HAP-1 (cell line): ENCODE measurements at regions of chr22 and their contacts with region 1.

Region 1: DNA sequence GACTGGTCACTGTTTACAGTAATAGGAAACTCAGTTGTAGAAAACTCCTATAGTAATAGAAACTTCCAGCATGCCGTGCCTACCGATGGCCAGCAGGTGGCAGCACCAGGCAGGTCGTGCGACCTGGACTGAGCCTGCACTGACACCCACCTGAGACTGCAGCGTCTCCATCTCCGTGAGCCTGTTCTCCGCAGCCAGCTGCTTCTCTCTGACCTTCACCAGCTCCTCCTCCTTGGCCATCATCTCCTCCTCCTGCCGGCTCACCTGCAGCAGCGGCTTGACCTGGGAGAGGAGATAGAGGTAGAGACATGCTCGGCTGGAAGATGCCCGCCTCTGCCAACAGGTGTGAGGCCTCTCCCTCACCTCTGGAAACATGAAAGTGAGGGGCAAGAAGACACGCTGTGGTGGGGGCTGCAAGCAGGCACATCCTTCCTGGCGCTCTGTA is 48.5 kb downstream of the APOL1 start:
- DNase-seq: peak; percentile 51 to 84
- H3K4me3 ChIP-seq: no peak overlapping the region
- H3K4me1 ChIP-seq: no peaks in the 10 kb centered on the region
- H3K27me3 ChIP-seq: no peaks in the 10 kb centered on the region

Region 2: DNA sequence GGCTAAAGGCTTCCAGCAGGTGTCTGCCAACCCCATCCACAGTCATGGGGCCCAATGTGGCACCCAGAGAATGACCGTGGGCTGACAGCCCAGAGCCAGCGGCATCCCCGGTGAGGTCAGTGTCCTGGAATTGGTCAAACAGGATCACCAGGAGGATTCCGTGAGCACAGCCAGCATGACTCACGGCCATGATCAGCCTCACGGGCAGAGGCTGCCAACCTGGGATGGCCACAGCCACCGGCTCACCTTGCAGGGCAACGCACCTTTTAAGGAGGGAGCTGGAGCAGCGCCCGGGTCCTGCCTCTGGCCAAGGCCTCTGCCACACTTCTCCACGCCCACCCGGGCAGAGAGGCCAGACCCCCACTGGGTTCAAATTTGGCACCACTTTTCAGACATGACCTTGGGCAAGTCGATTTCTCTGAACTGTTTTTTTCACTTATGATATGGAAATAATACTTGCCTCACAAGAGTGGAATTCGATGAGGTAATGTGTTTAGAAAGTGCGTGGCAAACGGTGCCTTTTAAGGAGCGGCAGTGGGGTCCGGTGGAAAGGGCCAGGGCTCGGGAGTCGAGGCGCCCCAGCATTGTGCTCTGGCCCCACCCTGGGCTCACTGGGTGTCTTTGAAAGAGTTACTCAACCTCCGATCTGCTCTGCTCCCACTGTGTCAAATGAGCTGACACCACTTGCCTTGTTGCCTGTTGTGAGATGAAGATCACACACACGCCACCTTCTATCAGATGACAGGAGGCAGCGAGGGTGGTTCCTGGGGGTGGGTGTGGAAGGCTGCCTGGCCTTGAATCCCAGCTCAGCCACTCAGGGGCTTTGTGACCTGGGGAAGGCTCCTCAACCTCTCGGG is 164.0 kb after region 1 on chr22:
- in situ Hi-C with region 1: loop called (anchors 5 kb)
- DNase-seq: no peak
- H3K4me3 ChIP-seq: no peak overlapping the region
- H3K4me1 ChIP-seq: no peaks in the 10 kb centered on the region
- H3K27me3 ChIP-seq: no peaks in the 10 kb centered on the region